Spleen (tissue), 13 donors: ENCODE measurements at regions of chr6 and their contacts with region 1.

Region 1: GRCh38 chr6:16200321-16200883 is 38.0 kb upstream of the GMPR start:
- DNase-seq: no peak
- H3K4me3 ChIP-seq: no peak overlapping the region
- H3K27ac ChIP-seq: peak overlapping the region in 1 of 8 donors; percentile 15
- H3K4me1 ChIP-seq: peaks cover 0 to 13% (median 5%) of the 10 kb centered on the region in 6 donors
- H3K27me3 ChIP-seq: peaks cover 0 to 5% (median 0%) of the 10 kb centered on the region in 7 donors
- CTCF ChIP-seq: no peak
- POLR2A ChIP-seq: no peak

Region 2: DNA sequence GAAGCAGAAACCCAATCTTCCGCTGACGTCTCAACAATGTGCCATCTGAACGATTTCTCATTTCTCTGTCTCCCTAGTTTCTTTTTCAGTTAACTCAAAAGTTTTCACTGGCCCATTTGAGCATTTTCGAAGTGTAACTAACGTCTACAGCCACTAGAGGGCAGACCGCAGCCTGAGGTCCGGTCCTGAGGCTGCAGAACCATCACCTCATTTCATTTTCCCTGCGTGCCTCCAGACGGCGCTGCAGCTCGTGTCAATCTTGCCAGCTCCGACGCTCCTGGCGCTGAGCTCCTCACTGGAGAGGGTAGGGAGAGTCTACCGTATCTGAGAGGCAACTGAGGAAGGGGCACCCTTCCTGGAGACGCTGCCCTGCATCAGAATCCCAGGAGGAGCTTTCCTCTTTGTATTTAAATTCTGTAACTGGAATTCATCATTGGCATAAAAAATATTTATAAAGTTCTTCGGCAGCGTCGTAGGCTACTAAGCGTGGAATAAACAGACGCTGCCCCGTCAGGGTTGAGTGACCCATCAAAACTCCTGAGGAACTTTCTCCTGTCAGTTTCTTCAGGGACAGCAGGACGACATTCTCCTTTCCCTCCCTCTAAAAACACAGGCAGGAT is 509.0 kb before region 1 on chr6:
- intact Hi-C with region 1: loop called (anchors 5 kb)
- DNase-seq: peak; percentile 93
- H3K4me3 ChIP-seq: peak overlapping the region in 3 of 8 donors; percentile 0 to 27 (median 4)
- H3K27ac ChIP-seq: peak overlapping the region in 6 of 8 donors; percentile 24 to 48 (median 38)
- H3K4me1 ChIP-seq: peaks cover 7 to 26% (median 18%) of the 10 kb centered on the region in 6 donors
- H3K27me3 ChIP-seq: peaks cover 0 to 21% (median 0%) of the 10 kb centered on the region in 7 donors
- CTCF ChIP-seq: peak; percentile 95 to 100 (median 98)
- POLR2A ChIP-seq: no peak